ENCODE measurements at regions of chr12 and their contacts with region 1.

Region 1: GRCh38 chr12:47216150-47216677 is 136.5 kb upstream of the AMIGO2 start:
- DNase-seq: peak; percentile 87
- H3K4me3 Mint-ChIP-seq: peak overlapping the region; percentile 85
- H3K27ac Mint-ChIP-seq: peak overlapping the region; percentile 96
- H3K4me1 Mint-ChIP-seq: peaks cover 19% of the 10 kb centered on the region
- H3K27me3 Mint-ChIP-seq: no peaks in the 10 kb centered on the region

Region 2: GRCh38 chr12:47079468-47079980 is 136.7 kb before region 1 on chr12 and contains the starts of genes AMIGO2 and PCED1B:
- CTCF ChIA-PET with region 1: interaction called, 4 read pairs
- POLR2A ChIA-PET with region 1: interaction called, 92 read pairs
- intact Hi-C with region 1: no loop called
- DNase-seq: peak; percentile 83
- H3K4me3 Mint-ChIP-seq: peak within 1 kb of the TSS; percentile 99
- H3K27ac Mint-ChIP-seq: peak within 1 kb of the TSS; percentile 92
- H3K4me1 Mint-ChIP-seq: peaks cover 72% of the 10 kb centered on the region
- H3K27me3 Mint-ChIP-seq: no peaks in the 10 kb centered on the region
- total RNA-seq, gene AMIGO2: 12.4 to 13.6 TPM
- total RNA-seq, gene PCED1B: 133 to 136 TPM

Region 3: GRCh38 chr12:47156167-47156736 is 60.0 kb before region 1 on chr12:
- CTCF ChIA-PET with region 1: no interaction called
- POLR2A ChIA-PET with region 1: no interaction called
- intact Hi-C with region 1: no loop called
- DNase-seq: no peak
- H3K4me3 Mint-ChIP-seq: no peak overlapping the region
- H3K27ac Mint-ChIP-seq: peak overlapping the region; percentile 44
- H3K4me1 Mint-ChIP-seq: peaks cover 40% of the 10 kb centered on the region
- H3K27me3 Mint-ChIP-seq: no peaks in the 10 kb centered on the region

Region 4: GRCh38 chr12:47307680-47308399 is 91.6 kb after region 1 on chr12:
- CTCF ChIA-PET with region 1: interaction called, 7 read pairs
- POLR2A ChIA-PET with region 1: interaction called, 44 read pairs
- intact Hi-C with region 1: loop called (anchors 2 kb)
- DNase-seq: peak; percentile 68
- H3K4me3 Mint-ChIP-seq: peak overlapping the region; percentile 82
- H3K27ac Mint-ChIP-seq: peak overlapping the region; percentile 90
- H3K4me1 Mint-ChIP-seq: peaks cover 75% of the 10 kb centered on the region
- H3K27me3 Mint-ChIP-seq: no peaks in the 10 kb centered on the region

Region 5: GRCh38 chr12:47361389-47362021 is 145.3 kb after region 1 on chr12:
- CTCF ChIA-PET with region 1: interaction called, 4 read pairs
- POLR2A ChIA-PET with region 1: interaction called, 22 read pairs
- intact Hi-C with region 1: loop called (anchors 1 kb)
- DNase-seq: peak; percentile 73
- H3K4me3 Mint-ChIP-seq: peak overlapping the region; percentile 66
- H3K27ac Mint-ChIP-seq: peak overlapping the region; percentile 99
- H3K4me1 Mint-ChIP-seq: peaks cover 60% of the 10 kb centered on the region
- H3K27me3 Mint-ChIP-seq: no peaks in the 10 kb centered on the region